Thyroid gland (tissue), 4 donors: ENCODE measurements at regions of chr4 and their contacts with region 1.

Region 1: GRCh38 chr4:46844325-46844917 is 64.6 kb downstream of the COX7B2 start:
- DNase-seq: peak; percentile 45 to 57
- H3K4me3 ChIP-seq: no peak overlapping the region
- H3K27ac ChIP-seq: no peak overlapping the region
- H3K4me1 ChIP-seq: no peaks in the 10 kb centered on the region
- H3K27me3 ChIP-seq: no peaks in the 10 kb centered on the region
- CTCF ChIP-seq: peak; percentile 17 to 73 (median 50)
- POLR2A ChIP-seq: no peak

Region 2: GRCh38 chr4:47032415-47033106 is 188.1 kb after region 1 on chr4:
- intact Hi-C with region 1: loop called (anchors 10 kb)
- DNase-seq: peak; percentile 52 to 58
- H3K4me3 ChIP-seq: peak overlapping the region in 2 of 3 donors; percentile 10 to 30
- H3K27ac ChIP-seq: no peak overlapping the region
- H3K4me1 ChIP-seq: peaks cover 0 to 4% of the 10 kb centered on the region in 2 donors
- H3K27me3 ChIP-seq: no peaks in the 10 kb centered on the region
- CTCF ChIP-seq: peak in 3 of 6 experiments; percentile 64 to 69 (median 68)
- POLR2A ChIP-seq: no peak

Region 3: GRCh38 chr4:47383829-47384427 is 539.5 kb after region 1 on chr4:
- intact Hi-C with region 1: loop called (anchors 10 kb)
- DNase-seq: no peak
- H3K4me3 ChIP-seq: no peak overlapping the region
- H3K27ac ChIP-seq: no peak overlapping the region
- H3K4me1 ChIP-seq: no peaks in the 10 kb centered on the region
- H3K27me3 ChIP-seq: no peaks in the 10 kb centered on the region
- CTCF ChIP-seq: peak in 4 of 6 experiments; percentile 16 to 69 (median 64)
- POLR2A ChIP-seq: no peak